Activated naive CD4-positive, alpha-beta T cell treated with anti-CD3 and anti-CD28 coated beads for 36 hours (primary cell): ENCODE measurements at regions of chr12 and their contacts with region 1.

Region 1: DNA sequence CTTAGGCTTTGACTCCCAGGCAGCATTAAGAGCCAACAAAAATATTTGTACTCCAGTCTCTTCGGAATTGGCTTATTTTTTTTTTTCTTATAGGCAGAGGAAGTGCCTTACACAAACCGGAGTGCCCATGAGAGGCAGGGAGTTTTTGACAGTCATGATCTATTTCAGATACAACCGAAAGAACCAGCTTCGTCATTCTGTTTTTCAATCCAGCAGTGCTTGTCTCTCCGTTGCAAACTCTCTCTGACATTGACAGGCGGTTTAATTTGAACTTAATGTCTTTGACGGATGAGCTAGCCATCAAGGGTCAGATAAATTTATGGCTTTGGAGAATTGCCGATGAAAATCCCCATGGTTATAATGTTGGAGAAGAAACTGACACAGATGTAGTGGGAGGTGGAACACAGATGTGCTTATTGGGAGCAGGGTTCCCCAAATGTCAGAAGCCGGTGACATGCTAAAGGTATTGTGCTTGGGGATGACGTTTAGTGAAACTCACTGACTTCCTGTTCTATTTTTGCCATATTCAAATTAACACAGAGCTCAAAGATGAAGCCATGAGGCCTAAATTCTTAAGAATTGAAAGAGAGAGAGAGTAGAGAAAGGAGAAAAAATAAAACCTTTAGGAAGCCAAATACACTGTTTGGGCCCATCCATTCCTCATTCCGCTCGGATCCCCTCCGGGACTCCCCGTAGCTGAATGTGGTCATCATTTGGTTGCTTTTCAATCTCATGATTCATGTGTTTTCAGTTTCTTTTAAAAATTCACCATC is 59.7 kb downstream of the PLXNC1 start:
- DNase-seq: peak; percentile 67
- H3K4me3 Mint-ChIP-seq: peak overlapping the region; percentile 70
- H3K27ac Mint-ChIP-seq: peak overlapping the region; percentile 97
- H3K4me1 Mint-ChIP-seq: peaks cover 62% of the 10 kb centered on the region
- H3K27me3 Mint-ChIP-seq: no peaks in the 10 kb centered on the region

Region 2: GRCh38 chr12:93440043-93440835 is 767.8 kb before region 1 on chr12:
- CTCF ChIA-PET with region 1: no interaction called
- intact Hi-C with region 1: no loop called
- DNase-seq: no peak
- H3K4me3 Mint-ChIP-seq: peak overlapping the region; percentile 90
- H3K27ac Mint-ChIP-seq: peak overlapping the region; percentile 91
- H3K4me1 Mint-ChIP-seq: peaks cover 60% of the 10 kb centered on the region
- H3K27me3 Mint-ChIP-seq: no peaks in the 10 kb centered on the region

Region 3: DNA sequence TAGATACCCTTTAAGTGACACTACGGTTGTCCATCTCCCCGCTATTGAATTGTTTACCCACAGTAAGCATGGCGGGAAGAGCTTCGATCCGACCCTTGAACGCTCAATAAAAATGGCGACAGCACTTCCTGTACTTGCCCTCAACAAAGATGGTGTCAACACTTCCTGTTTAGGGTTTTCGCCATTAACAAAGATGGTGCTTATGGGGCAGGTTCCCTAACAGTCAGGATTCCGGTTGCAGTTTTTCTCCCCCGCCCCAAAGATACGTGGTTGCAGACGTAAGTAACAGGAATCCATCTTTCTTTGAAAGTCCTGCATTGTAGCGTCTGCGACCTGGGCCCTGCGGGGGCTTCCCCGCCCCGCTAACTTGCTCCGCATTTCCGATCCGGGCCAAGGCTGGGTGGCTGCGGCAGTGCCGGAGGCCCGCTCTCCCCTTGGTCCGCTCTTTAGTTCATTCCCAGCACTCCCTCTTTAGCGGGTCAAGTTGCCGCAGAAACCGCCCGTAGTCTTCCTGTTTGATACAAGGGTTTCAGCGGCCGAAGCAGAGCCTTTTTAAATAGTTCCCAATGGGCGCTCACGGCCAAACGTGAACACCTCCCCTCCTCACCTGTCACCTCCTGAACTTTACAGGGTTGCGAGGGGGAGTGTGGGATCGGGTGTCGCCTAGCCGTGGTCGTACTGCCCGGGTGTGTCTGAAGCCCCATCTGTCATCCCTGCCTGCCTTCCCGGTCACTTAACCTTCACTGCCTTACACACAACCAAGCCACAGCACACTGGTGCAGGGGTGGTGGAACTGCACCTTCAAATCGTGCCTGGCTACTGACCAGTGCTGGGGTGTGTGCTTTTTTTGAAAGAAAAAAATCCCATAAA is 530.6 kb before region 1 on chr12 and contains the start of gene CRADD:
- CTCF ChIA-PET with region 1: no interaction called
- intact Hi-C with region 1: loop called (anchors 5 kb)
- DNase-seq: peak; percentile 92
- H3K4me3 Mint-ChIP-seq: peak within 1 kb of the TSS; percentile 89
- H3K27ac Mint-ChIP-seq: peak within 1 kb of the TSS; percentile 99
- H3K4me1 Mint-ChIP-seq: peaks cover 40% of the 10 kb centered on the region
- H3K27me3 Mint-ChIP-seq: peaks cover 9% of the 10 kb centered on the region
- total RNA-seq, gene CRADD: 14.3 to 15.6 TPM

Region 4: GRCh38 chr12:94230357-94230905 is 22.4 kb after region 1 on chr12:
- CTCF ChIA-PET with region 1: interaction called, 3 read pairs
- intact Hi-C with region 1: loop called (anchors 1 kb)
- DNase-seq: peak; percentile 14
- H3K4me3 Mint-ChIP-seq: no peak overlapping the region
- H3K27ac Mint-ChIP-seq: no peak overlapping the region
- H3K4me1 Mint-ChIP-seq: peaks cover 6% of the 10 kb centered on the region
- H3K27me3 Mint-ChIP-seq: no peaks in the 10 kb centered on the region

Region 5: DNA sequence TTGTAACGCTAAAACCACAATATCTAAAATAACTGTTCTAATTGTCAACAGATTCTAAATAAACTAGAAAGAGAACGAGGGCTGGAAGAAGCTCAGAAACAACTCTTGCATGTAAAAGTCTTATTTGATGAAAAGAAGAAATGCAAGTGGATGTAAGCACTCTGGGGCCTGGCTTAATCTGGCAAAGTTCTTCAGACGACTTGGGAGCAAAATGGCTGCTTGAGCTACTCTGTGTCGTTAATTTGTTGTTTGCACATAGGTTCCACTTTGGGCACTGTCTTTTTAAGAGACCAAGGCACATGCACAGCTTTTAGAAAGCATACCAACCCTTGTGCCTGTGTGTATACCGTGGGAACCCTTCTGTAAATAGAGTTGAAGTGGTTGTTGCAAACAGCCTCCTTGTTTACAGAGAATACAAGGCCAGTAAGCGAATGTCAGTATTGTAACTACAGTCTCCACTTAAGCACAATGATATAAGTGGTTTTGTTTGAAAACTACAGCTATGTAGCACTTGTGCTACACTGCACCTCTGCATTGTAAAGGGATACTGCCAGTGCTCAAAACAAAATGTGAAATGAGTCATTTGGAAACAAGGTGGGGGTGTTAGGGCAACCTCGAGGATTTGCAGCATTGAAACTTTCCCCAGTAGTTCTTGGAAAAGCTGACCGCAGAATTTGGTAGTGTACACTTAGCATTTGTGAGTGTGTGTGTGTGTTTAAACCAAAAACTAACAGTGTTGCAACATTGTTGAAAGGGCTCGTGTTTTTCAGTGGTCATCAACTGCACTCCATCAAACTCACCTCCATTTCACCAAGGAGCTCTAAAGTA is 97.3 kb after region 1 on chr12:
- CTCF ChIA-PET with region 1: no interaction called
- intact Hi-C with region 1: loop called (anchors 1 kb)
- DNase-seq: peak; percentile 58
- H3K4me3 Mint-ChIP-seq: no peak overlapping the region
- H3K27ac Mint-ChIP-seq: no peak overlapping the region
- H3K4me1 Mint-ChIP-seq: peaks cover 18% of the 10 kb centered on the region
- H3K27me3 Mint-ChIP-seq: no peaks in the 10 kb centered on the region

Region 6: DNA sequence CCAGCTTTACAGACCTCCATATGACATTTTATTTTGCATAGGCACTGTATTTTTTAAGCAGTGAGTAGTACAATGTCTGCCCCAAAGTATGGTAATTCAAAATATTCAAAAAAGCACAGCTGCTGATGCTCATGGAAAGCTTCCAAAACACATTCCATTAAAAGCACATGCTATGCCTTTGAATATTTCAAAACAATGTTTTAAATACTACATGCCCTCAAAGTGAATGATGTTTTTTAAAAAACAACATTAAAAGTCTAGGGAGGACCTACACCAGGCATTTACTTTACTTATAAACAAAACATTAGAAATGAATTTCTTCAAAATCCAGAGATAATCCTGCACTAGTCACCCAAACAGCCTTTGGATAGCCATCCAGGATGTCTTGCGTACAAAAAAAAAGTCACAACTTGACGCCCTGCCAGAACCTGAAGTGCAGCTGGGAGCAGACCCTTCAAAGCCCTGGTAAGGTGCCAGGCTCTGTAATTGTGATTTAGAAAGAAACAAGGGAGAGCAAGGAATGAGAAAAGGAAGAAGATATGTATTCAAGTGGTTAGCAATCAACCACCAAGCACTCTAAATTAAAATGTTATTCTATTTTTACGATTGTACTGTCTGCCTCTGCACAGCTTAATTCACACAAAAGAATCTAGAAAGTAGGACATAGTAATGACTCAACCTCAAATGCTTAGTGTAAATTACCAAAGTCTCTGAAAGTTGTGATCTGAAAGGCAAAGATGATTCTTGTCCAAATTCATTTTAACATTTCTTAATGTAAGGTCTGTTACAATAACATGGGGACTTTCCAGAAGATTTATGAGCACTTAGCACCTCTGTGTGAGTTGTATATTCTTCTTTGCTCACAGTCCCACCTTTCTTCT is 219.7 kb after region 1 on chr12:
- CTCF ChIA-PET with region 1: no interaction called
- intact Hi-C with region 1: loop called (anchors 1 kb)
- DNase-seq: peak; percentile 45
- H3K4me3 Mint-ChIP-seq: peak overlapping the region; percentile 28
- H3K27ac Mint-ChIP-seq: peak overlapping the region; percentile 63
- H3K4me1 Mint-ChIP-seq: peaks cover 34% of the 10 kb centered on the region
- H3K27me3 Mint-ChIP-seq: no peaks in the 10 kb centered on the region

Region 7: GRCh38 chr12:94644141-94644979 is 436.3 kb after region 1 on chr12:
- CTCF ChIA-PET with region 1: no interaction called
- intact Hi-C with region 1: loop called (anchors 2 kb)
- DNase-seq: peak; percentile 18
- H3K4me3 Mint-ChIP-seq: peak overlapping the region; percentile 8
- H3K27ac Mint-ChIP-seq: no peak overlapping the region
- H3K4me1 Mint-ChIP-seq: peaks cover 27% of the 10 kb centered on the region
- H3K27me3 Mint-ChIP-seq: peaks cover 50% of the 10 kb centered on the region